Activated CD4-positive, alpha-beta T cell treated with anti-CD3 and anti-CD28 coated beads, Interleukin-2, amount 10 ng/mL, durations not matched to agents 24 days and 14 days (primary cell): ENCODE measurements at regions of chr6 and their contacts with region 1.

Region 1: DNA sequence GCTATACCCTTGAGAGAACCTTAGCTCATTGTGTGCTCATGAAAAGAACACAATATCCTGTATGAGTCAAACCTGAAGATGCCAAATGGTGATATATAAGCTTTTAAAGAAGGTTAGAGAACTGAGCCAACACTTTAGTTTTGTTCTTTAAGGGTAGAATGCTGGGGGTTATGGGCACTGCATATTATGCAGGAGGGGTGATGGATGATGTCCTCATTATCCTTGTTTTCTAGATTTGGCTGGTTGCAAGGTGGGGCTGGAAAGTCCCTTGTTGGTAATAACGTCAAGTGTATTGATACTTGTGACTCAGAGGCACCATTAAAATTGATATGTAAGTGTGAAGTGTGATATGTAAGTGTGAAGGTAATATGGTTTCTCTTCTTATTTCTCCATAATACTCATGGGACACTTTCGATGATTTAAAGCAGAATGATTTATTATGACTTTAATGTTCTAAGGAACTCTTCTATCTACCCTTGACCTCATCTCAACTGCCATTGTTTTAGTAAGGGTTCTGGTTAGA is 113.7 kb upstream of the DTNBP1 start:
- DNase-seq: peak; percentile 67
- H3K4me3 Mint-ChIP-seq: peak overlapping the region; percentile 27
- H3K27ac Mint-ChIP-seq: peak overlapping the region; percentile 88
- H3K4me1 Mint-ChIP-seq: peaks cover 43% of the 10 kb centered on the region
- H3K27me3 Mint-ChIP-seq: no peaks in the 10 kb centered on the region

Region 2: GRCh38 chr6:14857501-14857900 is 919.0 kb before region 1 on chr6:
- intact Hi-C with region 1: loop called (anchors 5 kb)
- DNase-seq: peak; percentile 82
- H3K4me3 Mint-ChIP-seq: peak overlapping the region; percentile 71
- H3K27ac Mint-ChIP-seq: peak overlapping the region; percentile 98
- H3K4me1 Mint-ChIP-seq: peaks cover 35% of the 10 kb centered on the region
- H3K27me3 Mint-ChIP-seq: no peaks in the 10 kb centered on the region

Region 3: GRCh38 chr6:15062516-15063252 is 713.8 kb before region 1 on chr6:
- intact Hi-C with region 1: no loop called
- DNase-seq: no peak
- H3K4me3 Mint-ChIP-seq: no peak overlapping the region
- H3K27ac Mint-ChIP-seq: no peak overlapping the region
- H3K4me1 Mint-ChIP-seq: peaks cover 16% of the 10 kb centered on the region
- H3K27me3 Mint-ChIP-seq: no peaks in the 10 kb centered on the region

Region 4: GRCh38 chr6:15715060-15715459 is 61.5 kb before region 1 on chr6:
- intact Hi-C with region 1: loop called (anchors 1 kb)
- DNase-seq: no peak
- H3K4me3 Mint-ChIP-seq: no peak overlapping the region
- H3K27ac Mint-ChIP-seq: peak overlapping the region; percentile 75
- H3K4me1 Mint-ChIP-seq: peaks cover 9% of the 10 kb centered on the region
- H3K27me3 Mint-ChIP-seq: no peaks in the 10 kb centered on the region

Region 5: DNA sequence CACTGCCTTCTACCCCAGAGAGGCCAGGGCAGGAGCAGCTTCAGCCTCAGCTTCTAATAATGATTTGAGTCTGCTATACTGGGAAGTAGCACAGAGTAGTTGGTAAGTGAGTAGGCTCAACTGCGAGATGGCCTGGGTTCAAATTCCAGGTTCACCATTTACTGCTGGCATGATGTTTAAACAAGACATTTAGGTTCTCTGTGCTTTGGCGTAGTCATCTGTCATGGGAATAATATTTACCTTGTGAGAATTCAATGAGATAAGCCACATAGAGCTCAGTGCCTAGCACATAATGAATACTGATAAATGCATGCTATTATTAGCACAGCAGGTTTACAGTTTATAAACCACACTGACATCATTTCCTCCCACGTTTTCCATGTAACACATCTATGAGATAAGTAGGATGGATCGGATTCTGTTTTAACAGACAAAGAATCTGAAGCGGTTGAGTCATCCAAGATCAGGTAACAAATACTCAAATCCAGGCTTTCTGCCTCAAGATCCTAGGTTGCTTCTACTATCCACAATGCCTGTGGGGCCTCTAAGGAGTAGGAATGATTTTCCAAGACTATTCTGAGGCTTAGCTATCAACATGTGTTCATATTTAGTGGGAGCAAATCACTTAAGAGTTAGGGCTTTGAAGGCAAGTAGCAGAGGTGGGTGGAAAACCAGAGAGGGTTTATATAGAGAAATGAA is 40.8 kb before region 1 on chr6:
- intact Hi-C with region 1: loop called (anchors 1 kb)
- DNase-seq: peak; percentile 53
- H3K4me3 Mint-ChIP-seq: peak overlapping the region; percentile 68
- H3K27ac Mint-ChIP-seq: peak overlapping the region; percentile 81
- H3K4me1 Mint-ChIP-seq: peaks cover 35% of the 10 kb centered on the region
- H3K27me3 Mint-ChIP-seq: no peaks in the 10 kb centered on the region

Region 6: DNA sequence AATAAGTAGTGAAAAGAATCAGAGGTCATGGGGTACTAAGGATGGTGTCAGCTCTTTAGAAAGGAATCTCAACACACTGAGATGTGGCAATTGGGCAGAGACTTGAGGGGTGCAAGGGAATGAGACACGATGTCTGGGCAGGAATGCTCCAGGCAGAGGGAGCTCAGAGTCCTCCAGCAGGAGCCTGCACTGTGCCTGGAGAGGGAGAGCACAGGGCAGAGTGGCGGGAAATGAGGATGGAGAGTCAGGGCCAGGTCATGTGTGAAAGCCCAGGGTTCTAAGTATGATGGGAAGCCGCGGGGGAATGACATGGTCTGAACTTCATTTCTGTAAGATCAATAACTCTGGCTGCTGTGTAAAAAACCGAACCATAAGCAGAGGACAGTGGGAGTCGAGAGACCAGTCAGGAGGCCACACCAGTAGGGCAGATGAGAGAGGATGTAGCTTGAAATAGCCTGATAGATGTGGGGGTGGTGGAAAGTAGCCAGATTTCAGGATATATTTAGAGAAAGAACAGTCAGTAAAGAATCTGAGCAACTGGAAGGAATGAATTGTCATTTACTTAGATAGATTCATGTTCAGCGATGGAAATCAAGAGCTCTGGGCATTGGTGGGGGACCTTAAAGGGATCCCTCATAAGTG is 19.7 kb after region 1 on chr6:
- intact Hi-C with region 1: no loop called
- DNase-seq: no peak
- H3K4me3 Mint-ChIP-seq: no peak overlapping the region
- H3K27ac Mint-ChIP-seq: no peak overlapping the region
- H3K4me1 Mint-ChIP-seq: no peaks in the 10 kb centered on the region
- H3K27me3 Mint-ChIP-seq: no peaks in the 10 kb centered on the region

Region 7: GRCh38 chr6:15879382-15880261 is 103.1 kb after region 1 on chr6:
- intact Hi-C with region 1: loop called (anchors 1 kb)
- DNase-seq: peak; percentile 73
- H3K4me3 Mint-ChIP-seq: peak overlapping the region; percentile 4
- H3K27ac Mint-ChIP-seq: peak overlapping the region; percentile 89
- H3K4me1 Mint-ChIP-seq: peaks cover 29% of the 10 kb centered on the region
- H3K27me3 Mint-ChIP-seq: no peaks in the 10 kb centered on the region

Region 8: GRCh38 chr6:15893556-15894268 is 117.2 kb after region 1 on chr6:
- intact Hi-C with region 1: no loop called
- DNase-seq: no peak
- H3K4me3 Mint-ChIP-seq: no peak overlapping the region
- H3K27ac Mint-ChIP-seq: no peak overlapping the region
- H3K4me1 Mint-ChIP-seq: no peaks in the 10 kb centered on the region
- H3K27me3 Mint-ChIP-seq: no peaks in the 10 kb centered on the region

Region 9: DNA sequence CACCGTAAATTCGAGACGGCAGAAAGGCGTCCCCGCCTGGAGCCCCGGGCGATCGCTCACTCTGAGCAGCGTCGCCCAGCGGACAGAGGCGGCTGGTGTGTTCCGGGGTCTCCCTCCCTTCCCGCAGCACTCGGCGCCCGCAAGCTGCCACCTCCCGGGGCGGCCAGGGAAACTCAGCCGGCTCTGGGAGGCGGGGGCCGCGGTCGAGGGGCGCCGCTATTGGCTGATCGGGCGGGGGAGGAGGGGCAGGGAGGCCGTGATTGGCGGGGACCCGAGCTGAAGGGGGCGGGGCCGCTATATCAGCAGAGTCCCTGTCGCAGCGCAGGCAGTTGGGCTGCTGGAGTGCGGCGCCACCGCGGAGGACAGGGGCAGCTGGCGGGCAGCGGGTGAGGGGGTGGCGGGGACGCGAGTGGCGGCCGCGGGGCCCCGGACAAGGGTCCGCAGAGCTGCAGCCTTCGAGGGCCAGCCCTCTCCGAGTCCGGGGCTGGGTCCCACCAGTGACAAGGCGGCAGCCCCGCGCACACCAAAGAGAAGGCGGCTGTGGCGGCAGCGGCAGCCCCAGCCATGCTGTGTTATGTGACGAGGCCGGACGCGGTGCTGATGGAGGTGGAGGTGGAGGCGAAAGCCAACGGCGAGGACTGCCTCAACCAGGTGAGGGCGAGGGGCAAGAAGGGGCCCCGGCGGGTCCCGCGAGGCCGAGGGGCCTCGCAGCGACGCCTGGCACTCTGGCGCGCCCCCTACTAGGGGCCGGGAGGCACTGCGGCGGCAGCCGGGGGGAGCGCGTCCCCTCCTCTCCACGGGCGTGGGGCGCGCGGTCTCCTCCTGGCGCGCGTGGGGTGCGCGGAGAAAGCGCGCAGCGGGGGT is 352.5 kb after region 1 on chr6 and contains the start of gene MYLIP:
- intact Hi-C with region 1: loop called (anchors 1 kb)
- DNase-seq: peak; percentile 98
- H3K4me3 Mint-ChIP-seq: peak within 1 kb of the TSS; percentile 91
- H3K27ac Mint-ChIP-seq: peak within 1 kb of the TSS; percentile 93
- H3K4me1 Mint-ChIP-seq: peaks cover 32% of the 10 kb centered on the region
- H3K27me3 Mint-ChIP-seq: peaks cover 20% of the 10 kb centered on the region
- total RNA-seq, gene MYLIP: 18.3 and 18.5 TPM in 2 replicates